Transverse colon (tissue), 4 donors: ENCODE measurements at regions of chr19 and their contacts with region 1.

Region 1: GRCh38 chr19:38319421-38320258 is at the start of gene KCNK6:
- DNase-seq: peak; percentile 82
- H3K4me3 ChIP-seq: peak within 1 kb of the TSS; percentile 61 to 90 (median 67)
- H3K27ac ChIP-seq: peak within 1 kb of the TSS; percentile 83 to 91 (median 90)
- H3K4me1 ChIP-seq: peaks cover 16 to 55% (median 31%) of the 10 kb centered on the region in 4 donors
- H3K27me3 ChIP-seq: no peaks in the 10 kb centered on the region
- CTCF ChIP-seq: peak in 1 of 5 experiments; percentile 30
- EP300 ChIP-seq: no peak
- POLR2A ChIP-seq: peak; percentile 82
- total RNA-seq, gene KCNK6: 14.9 to 44.5 (median 17.6) TPM

Region 2: DNA sequence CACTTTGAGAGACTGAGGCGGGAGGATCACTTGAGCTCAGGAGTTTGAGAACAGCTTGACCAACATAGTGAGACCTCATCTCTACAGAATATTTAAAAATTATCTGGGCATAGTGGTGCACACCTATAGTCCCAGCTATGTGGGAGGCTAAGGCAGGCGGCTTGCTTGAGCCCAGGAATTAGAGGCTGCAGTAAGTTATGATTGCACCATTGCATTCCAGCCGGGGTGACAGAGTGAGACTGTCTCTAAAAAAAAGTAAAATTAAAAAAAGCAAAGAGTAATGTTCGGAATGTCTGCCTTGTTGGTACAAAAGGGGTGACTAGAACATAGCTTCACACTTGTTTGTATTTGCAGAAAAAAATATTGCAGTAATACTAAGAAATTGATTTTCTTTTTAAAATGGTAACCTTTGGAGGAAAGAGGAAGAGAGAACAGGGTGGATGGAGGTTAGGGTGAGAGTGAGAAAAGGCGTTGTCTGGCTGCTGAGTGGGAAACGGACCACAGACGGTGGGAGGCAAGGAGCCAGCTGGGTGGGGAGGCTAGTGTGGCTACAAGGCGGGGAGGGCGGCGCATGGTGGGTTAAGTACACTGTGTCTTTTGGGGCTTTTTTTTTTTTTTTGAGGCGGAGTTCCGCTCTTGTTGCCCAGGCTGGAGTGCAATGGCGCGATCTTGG is 73.7 kb before region 1 on chr19:
- in situ Hi-C with region 1: loop called in 1 of 4 experiments (anchors 10 kb)
- intact Hi-C with region 1: no loop called
- DNase-seq: no peak
- H3K4me3 ChIP-seq: no peak overlapping the region
- H3K27ac ChIP-seq: peak overlapping the region; percentile 46 to 88 (median 68)
- H3K4me1 ChIP-seq: peaks cover 14 to 55% (median 29%) of the 10 kb centered on the region in 4 donors
- H3K27me3 ChIP-seq: no peaks in the 10 kb centered on the region
- CTCF ChIP-seq: no peak
- EP300 ChIP-seq: no peak
- POLR2A ChIP-seq: no peak

Region 3: DNA sequence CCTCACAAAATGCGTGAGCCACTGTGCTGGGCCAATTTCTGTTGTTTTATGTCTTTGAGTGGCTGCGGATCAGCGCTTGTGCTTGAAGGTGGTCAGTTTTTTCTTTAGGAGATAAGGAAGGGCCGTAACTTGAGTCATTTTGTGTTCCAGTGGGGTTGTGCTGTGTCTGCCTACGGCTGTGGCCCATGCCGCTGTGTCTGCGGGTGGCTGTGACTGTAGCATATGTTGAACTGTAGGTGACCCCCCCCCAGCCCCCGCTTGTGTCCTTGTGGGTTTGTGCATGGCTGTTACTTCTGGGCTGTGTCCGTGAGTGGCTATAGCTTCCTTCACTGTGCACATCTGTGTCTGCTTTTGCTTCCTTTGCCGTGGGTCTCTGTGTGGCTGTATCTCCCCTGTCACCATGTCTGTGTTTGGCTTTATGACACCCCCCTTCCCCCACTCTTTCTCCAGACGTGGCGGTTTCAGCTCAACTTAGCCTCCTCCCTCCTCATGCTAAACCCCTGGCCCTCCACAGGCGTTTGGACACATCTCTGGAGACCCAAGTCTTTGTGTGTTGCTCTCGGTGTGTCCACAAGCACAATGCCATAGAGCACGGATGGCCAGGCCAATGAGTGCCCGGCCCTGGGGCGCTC is 64.1 kb before region 1 on chr19:
- in situ Hi-C with region 1: no loop called
- intact Hi-C with region 1: loop called (anchors 2 kb)
- DNase-seq: no peak
- H3K4me3 ChIP-seq: peak overlapping the region; percentile 44 to 65 (median 52)
- H3K27ac ChIP-seq: peak overlapping the region; percentile 83 to 92 (median 90)
- H3K4me1 ChIP-seq: peaks cover 22 to 60% (median 27%) of the 10 kb centered on the region in 4 donors
- H3K27me3 ChIP-seq: peaks cover 24% of the 10 kb centered on the region
- CTCF ChIP-seq: no peak
- EP300 ChIP-seq: no peak
- POLR2A ChIP-seq: no peak